Naive thymus-derived CD4-positive, alpha-beta T cell (primary cell): ENCODE measurements at regions of chr18 and their contacts with region 1.

Region 1: DNA sequence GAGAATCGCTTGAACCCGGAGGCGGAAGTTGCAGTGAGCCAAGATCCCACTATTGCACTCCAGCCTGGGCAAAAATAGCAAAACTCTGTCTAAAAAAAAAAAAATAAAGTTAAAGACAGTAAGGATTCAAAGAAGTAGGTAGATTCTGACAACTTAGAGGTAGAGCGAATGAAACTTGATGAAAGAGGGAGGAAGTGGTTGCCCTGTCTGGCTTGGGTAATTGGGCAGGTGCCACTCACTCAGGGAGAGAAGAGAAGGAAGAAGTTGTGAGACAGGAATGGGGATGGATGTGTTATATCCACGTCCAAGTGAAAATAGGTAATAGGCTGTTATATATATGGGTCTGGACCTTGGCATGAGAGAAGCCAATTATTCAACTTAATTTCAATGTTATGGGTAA is 26.3 kb downstream of the NDC80 start:
- DNase-seq: peak in 6 of 9 donors; percentile 33 to 59 (median 56)
- ATAC-seq: peak; percentile 69
- H3K4me3 ChIP-seq: no peak overlapping the region
- H3K4me3 Mint-ChIP-seq: peak overlapping the region in 9 of 10 donors; percentile 0 to 50 (median 25)
- H3K27ac ChIP-seq: no peak overlapping the region
- H3K27ac Mint-ChIP-seq: peak overlapping the region; percentile 36 to 83 (median 57)
- H3K4me1 ChIP-seq: peaks cover 5 to 36% of the 10 kb centered on the region in 2 donors
- H3K4me1 Mint-ChIP-seq: peaks cover 20 to 69% (median 59%) of the 10 kb centered on the region in 7 donors
- H3K27me3 ChIP-seq: no peaks in the 10 kb centered on the region
- H3K27me3 Mint-ChIP-seq: no peaks in the 10 kb centered on the region

Region 2: DNA sequence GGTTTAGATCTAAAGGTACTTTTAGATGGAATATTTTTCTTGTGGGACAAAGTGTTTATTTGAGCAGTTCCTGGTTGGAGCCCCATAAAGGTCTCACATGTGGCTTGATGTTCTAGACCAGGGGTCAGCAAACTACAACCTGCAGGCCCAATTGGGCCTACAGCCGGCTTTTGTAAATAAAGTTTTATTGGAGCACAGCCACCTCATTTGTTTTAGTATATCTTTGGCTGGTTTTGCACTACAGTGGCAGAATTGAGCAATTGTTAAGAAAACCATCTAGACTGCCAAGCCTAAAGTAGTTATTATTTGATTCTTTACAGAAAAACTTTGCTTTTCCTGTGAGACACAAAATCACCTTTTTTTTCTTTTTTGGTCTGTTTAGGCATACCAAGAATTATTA is 15.4 kb after region 1 on chr18:
- CTCF ChIA-PET with region 1: no interaction called
- POLR2A ChIA-PET with region 1: interaction called, 5 read pairs
- intact Hi-C with region 1: loop called in 1 of 2 experiments (anchors 2 kb)
- DNase-seq: no peak
- ATAC-seq: no peak
- H3K4me3 ChIP-seq: no peak overlapping the region
- H3K4me3 Mint-ChIP-seq: no peak overlapping the region
- H3K27ac ChIP-seq: no peak overlapping the region
- H3K27ac Mint-ChIP-seq: peak overlapping the region in 2 of 9 donors; percentile 11 to 65
- H3K4me1 ChIP-seq: peaks cover 0 to 6% of the 10 kb centered on the region in 2 donors
- H3K4me1 Mint-ChIP-seq: peaks cover 5 to 42% (median 32%) of the 10 kb centered on the region in 7 donors
- H3K27me3 ChIP-seq: no peaks in the 10 kb centered on the region
- H3K27me3 Mint-ChIP-seq: no peaks in the 10 kb centered on the region